ENCODE measurements at regions of chr12 and their contacts with region 1.

Region 1: DNA sequence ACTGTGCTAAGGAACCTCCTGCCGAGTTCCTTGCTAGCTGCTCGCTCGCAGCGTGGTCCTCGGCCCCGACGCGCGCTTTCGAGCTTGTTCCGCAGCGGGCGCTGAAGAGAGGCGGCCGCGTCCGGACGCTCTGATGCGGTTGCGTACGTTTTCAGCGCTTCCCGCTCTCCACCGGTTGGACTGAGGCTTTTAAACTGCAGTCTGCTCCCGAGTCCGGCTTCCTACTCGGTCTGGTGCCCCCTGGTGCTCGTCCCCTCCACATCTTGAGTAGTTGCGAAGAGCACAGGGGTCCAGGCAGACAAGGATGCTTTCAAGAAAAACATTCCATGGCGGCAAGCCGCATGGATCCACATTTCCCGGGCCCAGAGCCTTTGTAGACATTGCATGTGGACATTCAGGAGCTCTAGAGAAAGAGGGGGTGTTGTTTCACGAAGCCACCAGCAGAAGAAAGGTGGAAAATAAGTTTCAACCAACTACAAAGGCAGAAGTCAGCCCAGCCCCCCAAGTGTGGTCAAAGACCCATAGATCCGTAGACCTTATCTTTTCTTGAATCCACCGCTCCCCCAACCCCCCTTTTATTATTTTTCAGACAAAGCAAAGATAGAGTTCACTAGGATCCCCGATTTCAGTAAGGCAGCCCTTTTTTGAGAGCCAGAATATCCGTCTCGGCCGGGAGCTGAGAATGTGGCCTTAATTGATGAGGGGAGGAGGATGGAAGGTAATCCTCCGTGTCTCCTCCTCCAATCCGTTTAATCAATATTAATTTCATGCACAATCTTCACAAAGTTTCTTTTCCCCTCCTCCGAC is 984 bp upstream of the WNK1 start:
- DNase-seq: peak; percentile 86
- ATAC-seq: peak; percentile 76
- H3K4me3 ChIP-seq: peak overlapping the region; percentile 39 to 71
- H3K27ac ChIP-seq: peak overlapping the region; percentile 94
- H3K4me1 ChIP-seq: peaks cover 12% of the 10 kb centered on the region
- H3K27me3 ChIP-seq: no peaks in the 10 kb centered on the region
- CTCF ChIP-seq: peak; percentile 80

Region 2: DNA sequence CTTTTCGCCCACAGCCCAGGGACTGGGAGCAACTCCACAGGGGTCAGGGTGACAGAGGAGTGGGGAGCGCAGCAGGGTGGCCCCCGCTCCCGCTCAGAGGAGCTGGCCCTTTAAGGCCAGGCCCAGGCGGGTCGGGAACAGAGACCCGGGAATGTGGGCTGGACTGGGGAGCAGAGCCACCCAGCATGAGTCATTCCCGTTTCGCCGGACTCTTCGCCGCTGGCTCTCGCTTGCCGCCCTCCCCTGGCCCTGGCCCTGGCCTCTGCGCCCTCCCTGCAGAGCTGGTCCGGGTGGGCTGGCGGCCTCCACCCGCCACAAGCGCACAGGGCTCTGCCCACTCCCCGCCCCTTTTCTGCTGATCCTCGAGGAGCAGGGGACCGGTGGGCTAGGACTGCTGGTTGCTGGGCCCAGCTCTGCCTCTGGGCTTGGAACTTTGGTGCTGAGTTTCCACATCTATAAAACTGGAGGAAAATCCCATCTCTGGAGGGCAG is 180.9 kb before region 1 on chr12:
- CTCF ChIA-PET with region 1: interaction called, 3 read pairs
- POLR2A ChIA-PET with region 1: interaction called, 3 read pairs
- in situ Hi-C with region 1: no loop called
- intact Hi-C with region 1: loop called (anchors 2 kb)
- DNase-seq: peak; percentile 46
- ATAC-seq: peak; percentile 82
- H3K4me3 ChIP-seq: peak overlapping the region; percentile 53 to 78
- H3K27ac ChIP-seq: peak overlapping the region; percentile 98
- H3K4me1 ChIP-seq: peaks cover 20% of the 10 kb centered on the region
- H3K27me3 ChIP-seq: no peaks in the 10 kb centered on the region
- CTCF ChIP-seq: no peak

Region 3: DNA sequence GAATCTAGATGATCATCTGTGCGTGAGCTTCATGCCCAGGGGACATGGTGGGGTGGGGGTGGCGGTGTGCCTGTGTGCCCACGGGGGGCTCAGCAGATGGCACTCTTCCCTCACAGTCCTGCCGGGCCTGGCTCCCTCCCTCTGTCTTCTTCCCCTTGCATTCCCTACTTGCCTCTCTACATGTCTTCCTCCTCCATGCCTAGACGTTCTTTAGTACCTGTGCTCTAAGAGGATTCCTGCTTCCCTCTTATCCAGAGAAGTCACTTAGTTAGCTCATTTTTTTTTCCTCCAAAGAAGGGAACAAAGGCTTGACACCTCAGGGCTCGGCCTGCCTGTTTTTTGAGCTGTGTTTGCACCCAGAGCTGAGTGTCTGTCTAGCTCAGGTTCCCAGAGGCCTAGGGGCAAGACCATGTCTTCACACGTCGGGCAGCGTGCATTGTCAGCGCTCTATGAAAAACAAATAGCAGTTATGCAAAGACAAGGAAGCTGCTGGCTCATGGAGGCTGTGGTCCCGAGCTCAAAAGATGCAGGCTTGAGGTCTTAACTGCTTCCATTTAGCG is 136.9 kb before region 1 on chr12:
- CTCF ChIA-PET with region 1: interaction called, 14 read pairs
- POLR2A ChIA-PET with region 1: no interaction called
- in situ Hi-C with region 1: no loop called
- intact Hi-C with region 1: no loop called
- DNase-seq: no peak
- ATAC-seq: peak; percentile 73
- H3K4me3 ChIP-seq: no peak overlapping the region
- H3K27ac ChIP-seq: peak overlapping the region; percentile 74
- H3K4me1 ChIP-seq: peaks cover 13% of the 10 kb centered on the region
- H3K27me3 ChIP-seq: no peaks in the 10 kb centered on the region
- CTCF ChIP-seq: peak; percentile 64; the same call in 1 of the 2 replicates

Region 4: GRCh38 chr12:642633-643474 is 108.5 kb before region 1 on chr12:
- CTCF ChIA-PET with region 1: no interaction called
- POLR2A ChIA-PET with region 1: no interaction called
- in situ Hi-C with region 1: no loop called
- intact Hi-C with region 1: loop called (anchors 10 kb)
- DNase-seq: no peak
- ATAC-seq: peak; percentile 60
- H3K4me3 ChIP-seq: peak overlapping the region; percentile 21 to 29
- H3K27ac ChIP-seq: peak overlapping the region; percentile 90
- H3K4me1 ChIP-seq: peaks cover 48% of the 10 kb centered on the region
- H3K27me3 ChIP-seq: no peaks in the 10 kb centered on the region
- CTCF ChIP-seq: no peak; the same call in 1 of the 2 replicates

Region 5: GRCh38 chr12:835754-836518 is 84.5 kb after region 1 on chr12:
- CTCF ChIA-PET with region 1: no interaction called
- POLR2A ChIA-PET with region 1: no interaction called
- in situ Hi-C with region 1: no loop called
- intact Hi-C with region 1: no loop called
- DNase-seq: no peak
- ATAC-seq: no peak
- H3K4me3 ChIP-seq: no peak overlapping the region
- H3K27ac ChIP-seq: no peak overlapping the region
- H3K4me1 ChIP-seq: no peaks in the 10 kb centered on the region
- H3K27me3 ChIP-seq: no peaks in the 10 kb centered on the region
- CTCF ChIP-seq: no peak